ENCODE measurements at regions of chr2 and their contacts with region 1.

Region 1: GRCh38 chr2:201167546-201167945 is 15.4 kb upstream of the CASP10 start:
- DNase-seq: no peak
- ATAC-seq: peak; percentile 25

Region 2: GRCh38 chr2:201118121-201118960 is 49.2 kb before region 1 on chr2:
- intact Hi-C with region 1: loop called (anchors 10 kb)
- DNase-seq: peak; percentile 93
- ATAC-seq: peak; percentile 58